Posterior cingulate gyrus (tissue), 11 donors: ENCODE measurements at regions of chr5 and their contacts with region 1.

Region 1: GRCh38 chr5:58460732-58461286 is 923 bp upstream of the PLK2 start:
- DNase-seq: peak; percentile 79 to 98 (median 93)

Region 2: DNA sequence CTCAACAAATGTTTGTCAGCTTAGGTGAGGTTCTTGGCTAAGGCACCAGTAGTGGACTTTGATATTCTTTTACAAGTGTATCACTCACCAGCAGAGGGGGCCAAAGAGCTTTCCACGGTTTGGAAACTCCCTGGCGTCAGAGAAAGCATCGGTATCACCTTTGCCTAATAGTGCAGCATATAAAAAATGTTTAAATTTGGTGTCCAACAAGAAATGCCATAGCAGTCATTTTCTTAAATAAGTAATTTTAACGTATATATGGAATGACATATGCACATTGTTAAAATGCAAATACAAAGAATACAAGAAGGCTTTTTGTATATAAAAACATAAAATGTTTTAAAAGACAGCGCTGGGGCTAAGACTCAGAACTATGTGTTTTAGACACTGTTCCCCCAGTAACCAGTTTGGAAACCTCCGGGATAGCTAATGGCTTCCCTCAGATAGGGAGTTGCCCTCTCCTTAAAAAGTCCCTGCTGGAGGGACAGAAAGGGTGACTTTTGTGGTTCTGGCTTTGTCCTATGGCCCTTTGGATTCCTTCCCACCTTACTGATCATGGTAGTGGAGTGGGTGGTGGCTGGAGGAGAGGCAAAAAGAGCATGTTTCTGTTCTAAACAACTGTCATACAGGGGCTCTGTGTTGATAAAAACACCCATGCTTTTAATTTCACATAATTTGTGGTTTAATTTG is 1162.4 kb before region 1 on chr5:
- intact Hi-C with region 1: loop called (anchors 1 kb)
- DNase-seq: peak; percentile 35 to 94 (median 82)

Region 3: DNA sequence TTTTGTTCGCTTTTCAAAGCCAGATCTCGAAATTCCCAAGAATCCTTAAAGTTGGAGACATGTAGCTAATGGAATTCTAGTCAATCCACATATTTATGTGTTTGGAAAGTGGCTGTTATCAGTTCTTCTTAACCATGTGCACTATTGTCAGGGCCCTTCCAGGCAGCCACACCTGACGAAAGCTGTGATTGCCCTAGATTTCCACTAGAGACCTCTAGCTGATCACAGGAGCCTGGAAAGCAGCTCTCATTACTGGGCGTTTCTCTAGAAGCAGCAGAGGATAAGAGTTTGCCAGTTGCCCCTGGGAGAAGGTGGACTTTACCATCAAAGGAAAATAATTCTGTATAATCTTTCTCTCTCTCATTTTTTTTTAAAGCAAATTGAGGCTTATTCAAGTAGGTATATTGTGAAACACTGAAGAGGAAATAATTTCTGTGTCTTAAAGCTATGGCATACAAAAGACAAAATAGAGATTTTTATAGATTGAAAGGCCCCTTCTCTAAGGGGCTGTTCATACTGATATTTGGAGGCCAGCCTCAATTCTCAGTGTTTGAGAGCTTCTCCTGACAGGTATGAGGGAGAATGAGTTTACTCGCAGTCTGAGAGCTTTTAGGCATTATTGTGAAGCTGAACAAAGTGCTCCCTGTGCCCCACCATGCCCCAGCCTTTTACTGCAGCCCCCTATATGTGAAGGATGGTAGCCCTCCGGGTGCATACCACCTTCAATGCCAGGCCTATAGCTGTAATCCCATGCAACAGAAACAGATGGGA is 572.8 kb before region 1 on chr5:
- intact Hi-C with region 1: loop called (anchors 5 kb)
- DNase-seq: peak in 4 of 10 donors; percentile 22 to 76 (median 56)

Region 4: GRCh38 chr5:58579781-58580180 is 119.0 kb after region 1 on chr5:
- intact Hi-C with region 1: no loop called
- DNase-seq: no peak

Region 5: DNA sequence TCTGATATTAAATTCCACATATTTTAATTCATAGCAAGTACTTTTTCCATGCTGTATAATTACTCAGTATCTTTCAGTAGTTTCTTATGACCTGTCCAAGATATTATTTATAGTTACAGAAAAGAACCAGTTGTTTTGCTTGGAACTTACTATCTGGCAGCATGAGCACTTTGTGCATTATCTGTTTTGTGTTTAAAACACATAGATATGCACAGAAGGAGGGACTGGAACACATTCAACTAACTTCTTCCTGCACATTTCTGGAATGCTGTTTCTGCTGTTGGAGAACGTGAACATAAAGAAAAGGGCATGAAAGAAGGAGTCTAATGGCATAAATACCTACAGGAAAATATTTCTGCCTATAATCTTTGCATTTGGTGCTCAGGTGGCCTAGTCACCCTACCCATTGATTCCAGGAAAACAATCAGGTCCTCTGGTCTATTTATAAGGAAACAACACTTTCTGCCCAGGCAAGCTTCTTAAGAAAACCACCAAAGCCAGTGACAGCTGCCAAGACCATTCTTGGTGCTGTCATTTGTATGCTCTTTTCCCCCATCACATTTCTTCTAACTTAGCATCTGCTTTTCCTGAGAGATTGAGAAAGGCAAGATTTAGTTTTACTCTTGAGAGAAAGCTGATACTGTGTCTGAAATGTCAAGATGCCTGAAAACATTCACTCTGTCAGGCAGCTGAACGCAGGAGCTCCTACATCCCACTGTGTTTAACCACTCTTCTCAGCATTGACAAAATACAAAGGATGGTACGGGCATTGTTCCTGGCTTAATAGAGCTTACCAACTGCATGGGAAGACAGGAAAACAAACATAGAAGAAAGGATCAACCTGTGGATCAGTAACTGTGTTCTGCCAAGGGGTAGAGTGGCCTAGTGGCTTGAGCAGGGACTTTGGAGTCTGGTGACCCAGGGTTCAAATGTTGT is 162.4 kb after region 1 on chr5:
- intact Hi-C with region 1: no loop called
- DNase-seq: no peak

Region 6: GRCh38 chr5:58818462-58818861 is 357.7 kb after region 1 on chr5:
- intact Hi-C with region 1: no loop called
- DNase-seq: no peak